Naive thymus-derived CD4-positive, alpha-beta T cell (primary cell): ENCODE measurements at regions of chr7 and their contacts with region 1.

Region 1: GRCh38 chr7:15652776-15653290 is 33.6 kb downstream of the MEOX2 start:
- DNase-seq: no peak
- ATAC-seq: no peak
- H3K4me3 ChIP-seq: no peak overlapping the region
- H3K4me3 Mint-ChIP-seq: no peak overlapping the region
- H3K27ac ChIP-seq: no peak overlapping the region
- H3K27ac Mint-ChIP-seq: no peak overlapping the region
- H3K4me1 ChIP-seq: no peaks in the 10 kb centered on the region
- H3K4me1 Mint-ChIP-seq: no peaks in the 10 kb centered on the region
- H3K27me3 ChIP-seq: no peaks in the 10 kb centered on the region
- H3K27me3 Mint-ChIP-seq: no peaks in the 10 kb centered on the region

Region 2: DNA sequence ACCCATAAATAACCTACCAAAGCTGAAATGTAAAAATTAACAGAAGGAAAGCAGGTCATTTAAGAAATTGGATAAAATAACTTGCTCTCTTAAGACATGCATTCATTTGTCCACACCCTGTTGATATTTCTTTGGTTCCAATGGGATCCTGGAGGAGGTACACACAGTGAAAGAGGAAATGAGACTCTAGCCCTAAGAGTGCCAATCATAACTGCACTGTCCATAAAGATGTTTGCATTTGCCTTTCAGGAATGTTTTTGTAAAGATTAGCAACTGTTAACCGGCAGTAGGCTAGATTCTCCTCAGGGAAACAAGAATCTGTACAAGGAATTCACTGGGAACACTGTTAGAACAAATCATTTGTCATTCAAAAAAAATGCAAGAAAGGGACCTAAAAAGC is 27.4 kb before region 1 on chr7:
- CTCF ChIA-PET with region 1: no interaction called
- POLR2A ChIA-PET with region 1: no interaction called
- intact Hi-C with region 1: no loop called
- DNase-seq: no peak
- ATAC-seq: no peak
- H3K4me3 ChIP-seq: no peak overlapping the region
- H3K4me3 Mint-ChIP-seq: no peak overlapping the region
- H3K27ac ChIP-seq: no peak overlapping the region
- H3K27ac Mint-ChIP-seq: no peak overlapping the region
- H3K4me1 ChIP-seq: no peaks in the 10 kb centered on the region
- H3K4me1 Mint-ChIP-seq: no peaks in the 10 kb centered on the region
- H3K27me3 ChIP-seq: no peaks in the 10 kb centered on the region
- H3K27me3 Mint-ChIP-seq: no peaks in the 10 kb centered on the region

Region 3: GRCh38 chr7:15686295-15686956 is 33.6 kb after region 1 on chr7 and contains the start of gene MEOX2:
- CTCF ChIA-PET with region 1: no interaction called
- POLR2A ChIA-PET with region 1: no interaction called
- intact Hi-C with region 1: no loop called
- DNase-seq: no peak
- ATAC-seq: no peak
- H3K4me3 ChIP-seq: no peak within 1 kb of the TSS
- H3K4me3 Mint-ChIP-seq: no peak within 1 kb of the TSS
- H3K27ac ChIP-seq: no peak within 1 kb of the TSS
- H3K27ac Mint-ChIP-seq: no peak within 1 kb of the TSS
- H3K4me1 ChIP-seq: no peaks in the 10 kb centered on the region
- H3K4me1 Mint-ChIP-seq: no peaks in the 10 kb centered on the region
- H3K27me3 ChIP-seq: no peaks in the 10 kb centered on the region
- H3K27me3 Mint-ChIP-seq: peaks cover 43 to 49% (median 48%) of the 10 kb centered on the region in 5 donors
- total RNA-seq, gene MEOX2: not detected

Region 4: GRCh38 chr7:15709978-15710377 is 57.1 kb after region 1 on chr7:
- CTCF ChIA-PET with region 1: no interaction called
- POLR2A ChIA-PET with region 1: no interaction called
- intact Hi-C with region 1: loop called in 1 of 2 experiments (anchors 10 kb)
- DNase-seq: no peak
- ATAC-seq: no peak
- H3K4me3 ChIP-seq: no peak overlapping the region
- H3K4me3 Mint-ChIP-seq: no peak overlapping the region
- H3K27ac ChIP-seq: no peak overlapping the region
- H3K27ac Mint-ChIP-seq: no peak overlapping the region
- H3K4me1 ChIP-seq: no peaks in the 10 kb centered on the region
- H3K4me1 Mint-ChIP-seq: peaks cover 0 to 2% (median 0%) of the 10 kb centered on the region in 7 donors
- H3K27me3 ChIP-seq: no peaks in the 10 kb centered on the region
- H3K27me3 Mint-ChIP-seq: no peaks in the 10 kb centered on the region